ENCODE measurements at regions of chr12 and their contacts with region 1.

Region 1: DNA sequence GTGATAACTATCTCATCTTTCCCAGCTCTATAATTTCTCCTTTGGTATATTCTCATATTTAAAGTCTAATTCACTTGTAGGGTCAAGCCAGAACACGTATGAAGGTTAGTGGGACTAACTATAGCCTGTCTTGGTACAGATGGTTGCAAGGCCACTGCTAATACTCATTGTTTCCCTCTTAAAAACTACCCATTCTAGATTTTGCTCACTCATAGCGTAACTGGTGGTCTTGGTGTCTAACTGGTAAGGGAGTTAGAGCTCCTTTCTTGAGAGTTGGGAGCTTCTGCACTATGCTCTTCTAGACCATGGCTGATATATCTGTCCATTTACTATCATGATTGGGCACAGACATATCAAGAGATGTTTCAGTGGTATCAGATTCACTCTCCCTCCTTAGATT is 8.8 kb downstream of the MGP start:
- DNase-seq: no peak
- H3K4me3 ChIP-seq: no peak overlapping the region
- H3K27ac ChIP-seq: no peak overlapping the region
- H3K4me1 ChIP-seq: no peaks in the 10 kb centered on the region
- H3K27me3 ChIP-seq: no peaks in the 10 kb centered on the region
- CTCF ChIP-seq: no peak

Region 2: DNA sequence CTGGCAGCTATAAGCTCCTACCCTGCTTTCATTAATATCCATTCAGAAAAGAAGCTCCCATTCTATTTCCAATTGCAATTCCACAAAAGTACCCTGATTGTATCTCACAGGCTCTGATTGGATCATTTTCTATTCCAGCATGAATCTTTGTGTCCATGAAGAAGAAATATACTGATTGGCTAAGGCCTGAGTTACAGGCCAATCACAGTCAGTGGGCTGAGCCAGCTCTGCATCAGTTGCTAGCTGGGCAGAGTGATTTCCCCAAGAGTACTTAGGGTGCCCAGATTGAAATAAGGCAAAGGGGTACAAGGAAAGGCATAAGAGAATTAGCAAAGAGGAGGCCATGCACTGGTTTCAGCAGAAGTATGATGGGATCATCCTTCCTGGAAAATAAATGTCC is 47.9 kb before region 1 on chr12:
- CTCF ChIA-PET with region 1: no interaction called
- dilution Hi-C with region 1: no loop called
- in situ Hi-C with region 1: no loop called
- intact Hi-C with region 1: no loop called
- DNase-seq: no peak
- H3K4me3 ChIP-seq: no peak overlapping the region
- H3K27ac ChIP-seq: no peak overlapping the region
- H3K4me1 ChIP-seq: peaks cover 11% of the 10 kb centered on the region
- H3K27me3 ChIP-seq: no peaks in the 10 kb centered on the region
- CTCF ChIP-seq: no peak

Region 3: DNA sequence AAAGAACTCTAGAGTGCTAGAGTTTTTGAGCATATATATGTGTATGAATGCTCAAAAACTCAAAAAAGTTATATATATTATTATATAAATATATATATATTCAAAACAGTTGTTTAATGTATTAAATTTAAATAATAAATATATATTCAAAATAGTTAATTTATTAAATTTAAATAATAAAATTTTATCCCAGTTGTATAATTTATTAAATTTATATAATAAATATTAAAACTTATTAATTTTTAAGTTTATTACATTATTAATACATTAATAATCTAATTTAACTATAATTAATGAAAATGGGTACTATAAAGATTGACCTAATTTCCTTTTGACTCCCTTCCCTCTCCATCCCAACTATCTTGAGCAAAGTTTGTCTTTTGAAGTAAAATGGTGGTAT is 246.6 kb after region 1 on chr12:
- CTCF ChIA-PET with region 1: interaction called, 31 read pairs
- dilution Hi-C with region 1: no loop called
- in situ Hi-C with region 1: no loop called
- intact Hi-C with region 1: no loop called
- DNase-seq: no peak
- H3K4me3 ChIP-seq: no peak overlapping the region
- H3K27ac ChIP-seq: no peak overlapping the region
- H3K4me1 ChIP-seq: no peaks in the 10 kb centered on the region
- H3K27me3 ChIP-seq: no peaks in the 10 kb centered on the region
- CTCF ChIP-seq: no peak

Region 4: DNA sequence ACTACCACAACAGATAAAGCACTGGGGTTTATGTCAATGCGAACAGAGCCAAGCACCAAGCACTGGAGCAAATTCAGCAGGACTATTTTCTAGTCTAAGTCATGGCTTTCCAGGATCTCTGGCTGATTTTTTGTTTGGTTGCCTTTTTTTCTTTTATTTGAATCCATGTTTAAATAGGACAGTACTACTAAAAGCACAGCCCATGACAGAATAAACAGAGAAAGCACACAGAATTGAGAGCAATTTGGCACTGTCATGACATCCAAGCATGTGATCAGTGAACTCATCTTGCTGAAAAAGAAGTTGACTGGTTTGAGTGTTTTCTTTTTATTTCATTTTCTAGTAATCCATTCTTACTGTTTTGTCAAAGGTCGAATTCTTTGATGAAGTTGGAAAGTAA is 367.5 kb after region 1 on chr12:
- CTCF ChIA-PET with region 1: no interaction called
- dilution Hi-C with region 1: no loop called
- in situ Hi-C with region 1: no loop called
- intact Hi-C with region 1: no loop called
- DNase-seq: no peak
- H3K4me3 ChIP-seq: no peak overlapping the region
- H3K27ac ChIP-seq: no peak overlapping the region
- H3K4me1 ChIP-seq: no peaks in the 10 kb centered on the region
- H3K27me3 ChIP-seq: peaks cover 13% of the 10 kb centered on the region
- CTCF ChIP-seq: no peak

Region 5: DNA sequence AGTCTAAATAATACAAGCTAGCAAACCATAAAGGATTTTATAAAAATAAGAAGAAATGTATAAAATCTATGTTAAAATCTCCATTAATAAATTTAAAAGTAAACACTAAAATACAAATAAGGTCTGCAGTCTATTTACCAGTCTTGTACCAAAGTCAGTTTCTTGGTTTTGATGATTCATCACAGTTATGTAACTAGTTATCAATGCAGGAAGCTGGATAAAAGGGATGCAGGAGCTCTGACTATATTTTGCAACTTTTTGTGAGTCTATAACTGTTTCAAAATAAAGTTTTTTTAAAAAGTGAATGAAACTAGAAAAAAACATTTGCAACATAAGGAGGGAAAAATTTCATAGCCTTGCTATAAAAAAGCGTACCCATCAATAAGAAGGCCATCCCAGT is 1185.8 kb after region 1 on chr12:
- CTCF ChIA-PET with region 1: no interaction called
- dilution Hi-C with region 1: no loop called
- in situ Hi-C with region 1: no loop called
- intact Hi-C with region 1: no loop called
- DNase-seq: peak; percentile 14
- H3K4me3 ChIP-seq: no peak overlapping the region
- H3K27ac ChIP-seq: no peak overlapping the region
- H3K4me1 ChIP-seq: no peaks in the 10 kb centered on the region
- H3K27me3 ChIP-seq: no peaks in the 10 kb centered on the region
- CTCF ChIP-seq: no peak

Measured in mammary epithelial cell (primary cell).